Common myeloid progenitor, CD34-positive (primary cell): ENCODE measurements at regions of chr12 and their contacts with region 1.

Region 1: DNA sequence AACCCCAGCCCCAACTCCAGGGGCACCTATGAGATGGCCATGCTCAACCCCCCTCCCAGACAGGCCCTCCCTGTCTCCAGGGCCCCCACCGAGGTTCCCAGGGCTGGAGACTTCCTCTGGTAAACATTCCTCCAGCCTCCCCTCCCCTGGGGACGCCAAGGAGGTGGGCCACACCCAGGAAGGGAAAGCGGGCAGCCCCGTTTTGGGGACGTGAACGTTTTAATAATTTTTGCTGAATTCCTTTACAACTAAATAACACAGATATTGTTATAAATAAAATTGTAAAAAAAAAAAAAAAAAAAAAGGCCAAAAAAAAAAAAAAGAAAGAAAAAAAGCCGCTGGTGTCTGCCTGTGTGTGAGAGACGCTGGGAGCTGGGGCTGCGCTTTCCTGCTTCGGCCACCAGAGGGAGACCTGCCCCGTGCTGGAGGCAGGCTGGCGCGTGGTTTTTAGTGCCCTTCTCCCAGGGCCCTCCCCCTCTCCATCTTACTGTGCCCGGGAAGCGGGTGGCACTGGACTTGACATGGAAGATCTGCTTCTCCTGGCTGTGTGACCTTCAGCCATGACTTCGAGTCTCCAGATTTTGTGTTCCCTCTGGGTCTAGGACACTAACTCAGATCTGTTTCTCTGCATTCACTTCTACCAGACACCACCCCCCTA is 3.4 kb upstream of the NXPH4 start:
- DNase-seq: peak; percentile 84 to 89 (median 87)
- H3K4me3 ChIP-seq: no peak overlapping the region
- H3K27ac ChIP-seq: no peak overlapping the region
- H3K4me1 ChIP-seq: peaks cover 0 to 20% (median 13%) of the 10 kb centered on the region in 4 experiments
- H3K27me3 ChIP-seq: peaks cover 9 to 47% (median 35%) of the 10 kb centered on the region in 5 experiments

Region 2: GRCh38 chr12:57229634-57230380 is 16.6 kb after region 1 on chr12 and contains the start of gene SHMT2:
- CTCF ChIA-PET with region 1: interaction called, 170 read pairs
- POLR2A ChIA-PET with region 1: no interaction called
- DNase-seq: peak; percentile 88 to 93 (median 89)
- H3K4me3 ChIP-seq: peak within 1 kb of the TSS; percentile 55 to 92 (median 79)
- H3K27ac ChIP-seq: peak within 1 kb of the TSS in 1 of 2 experiments; percentile 75
- H3K4me1 ChIP-seq: peaks cover 9 to 56% (median 48%) of the 10 kb centered on the region in 4 experiments
- H3K27me3 ChIP-seq: peaks cover 7 to 36% (median 15%) of the 10 kb centered on the region in 5 experiments

Region 3: GRCh38 chr12:57368349-57369095 is 155.3 kb after region 1 on chr12:
- CTCF ChIA-PET with region 1: no interaction called
- POLR2A ChIA-PET with region 1: no interaction called
- DNase-seq: no peak
- H3K4me3 ChIP-seq: no peak overlapping the region
- H3K27ac ChIP-seq: no peak overlapping the region
- H3K4me1 ChIP-seq: no peaks in the 10 kb centered on the region
- H3K27me3 ChIP-seq: no peaks in the 10 kb centered on the region